Activated T-helper 1 cell treated with anti-CD3 and anti-CD28 coated beads, Interleukin-12 subunit alpha, Interleukin-12 subunit beta, Interleukin-2, Interleukin-4 antibody, amounts not matched to agents 30 ng/mL and 10 ng/mL and 1 ng/mL, durations not matched to agents 14 hours and 24 hours and 36 hours (primary cell): ENCODE measurements at regions of chr4 and their contacts with region 1.

Region 1: GRCh38 chr4:150867148-150867547 is 147.9 kb downstream of the LRBA start:
- DNase-seq: peak; percentile 15
- H3K4me3 Mint-ChIP-seq: no peak overlapping the region
- H3K27ac Mint-ChIP-seq: no peak overlapping the region
- H3K4me1 Mint-ChIP-seq: no peaks in the 10 kb centered on the region
- H3K27me3 Mint-ChIP-seq: no peaks in the 10 kb centered on the region

Region 2: GRCh38 chr4:149999485-150000074 is 867.6 kb before region 1 on chr4:
- intact Hi-C with region 1: loop called (anchors 5 kb)
- DNase-seq: no peak
- H3K4me3 Mint-ChIP-seq: no peak overlapping the region
- H3K27ac Mint-ChIP-seq: no peak overlapping the region
- H3K4me1 Mint-ChIP-seq: peaks cover 6% of the 10 kb centered on the region
- H3K27me3 Mint-ChIP-seq: peaks cover 2% of the 10 kb centered on the region

Region 3: GRCh38 chr4:150577796-150578195 is 289.4 kb before region 1 on chr4:
- intact Hi-C with region 1: no loop called
- DNase-seq: no peak
- H3K4me3 Mint-ChIP-seq: no peak overlapping the region
- H3K27ac Mint-ChIP-seq: no peak overlapping the region
- H3K4me1 Mint-ChIP-seq: peaks cover 6% of the 10 kb centered on the region
- H3K27me3 Mint-ChIP-seq: no peaks in the 10 kb centered on the region

Region 4: DNA sequence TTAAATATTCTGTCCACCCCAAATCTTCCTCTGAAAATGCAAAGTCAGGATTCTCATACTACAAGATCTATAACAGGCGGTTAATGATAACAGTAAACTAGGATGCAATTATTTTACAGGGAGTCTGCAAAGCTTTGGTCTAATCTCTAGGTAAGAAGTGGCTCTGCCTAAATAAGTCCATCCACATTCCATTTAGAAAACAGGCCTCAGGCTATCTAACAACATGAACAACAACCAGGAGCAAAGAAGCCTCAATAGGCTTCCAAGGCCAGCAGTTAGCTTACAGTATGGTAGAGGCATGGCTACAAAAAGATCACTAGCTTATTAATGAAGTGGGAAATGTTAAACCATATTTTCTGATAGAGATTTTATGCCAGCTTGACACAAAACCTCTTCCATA is 278.8 kb before region 1 on chr4:
- intact Hi-C with region 1: loop called (anchors 5 kb)
- DNase-seq: no peak
- H3K4me3 Mint-ChIP-seq: no peak overlapping the region
- H3K27ac Mint-ChIP-seq: no peak overlapping the region
- H3K4me1 Mint-ChIP-seq: no peaks in the 10 kb centered on the region
- H3K27me3 Mint-ChIP-seq: no peaks in the 10 kb centered on the region